ENCODE measurements at regions of chr5 and their contacts with region 1.

Region 1: DNA sequence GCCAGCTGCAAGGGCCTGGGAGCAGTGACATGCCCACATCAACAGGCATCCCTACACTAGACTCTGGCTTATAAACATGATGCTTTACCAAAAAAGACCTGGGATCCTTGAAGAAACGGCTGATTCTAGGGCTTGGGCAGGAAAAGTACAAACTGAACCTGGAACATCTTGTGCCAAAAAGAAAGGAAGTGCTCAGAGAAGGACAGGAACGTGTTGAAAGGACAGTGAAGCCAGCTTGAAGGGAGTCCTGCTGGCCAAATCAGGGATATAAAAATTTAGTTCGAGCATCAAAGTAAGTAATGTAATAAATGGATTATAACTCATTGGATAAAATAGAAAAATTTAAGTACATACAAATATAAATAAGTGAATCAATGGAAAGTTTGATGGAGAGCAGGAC is 58.1 kb downstream of the ALDH7A1 start:
- DNase-seq: no peak
- ATAC-seq: no peak
- H3K4me3 ChIP-seq: no peak overlapping the region
- H3K27ac ChIP-seq: no peak overlapping the region
- H3K4me1 ChIP-seq: peaks cover 8% of the 10 kb centered on the region
- H3K27me3 ChIP-seq: no peaks in the 10 kb centered on the region
- CTCF ChIP-seq: no peak

Region 2: DNA sequence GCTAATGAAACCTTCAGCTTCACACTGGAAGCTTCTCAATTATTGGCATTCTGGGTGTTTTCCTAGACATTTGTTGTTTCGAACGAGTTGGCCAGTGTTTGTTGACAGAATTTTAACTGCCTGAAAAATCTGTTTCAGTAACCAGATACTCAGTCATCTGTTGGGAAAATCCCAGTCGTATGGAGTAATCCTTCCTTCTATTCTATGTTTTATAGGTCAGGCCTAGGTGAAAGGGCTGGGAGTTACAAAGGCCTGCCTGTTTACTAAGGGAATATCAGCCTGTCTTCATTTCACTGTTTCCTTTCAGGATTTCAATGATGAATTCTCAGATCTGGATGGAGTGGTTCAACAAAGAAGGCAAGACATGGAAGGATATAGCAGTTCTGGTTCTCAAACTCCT is 53.7 kb before region 1 on chr5:
- CTCF ChIA-PET with region 1: no interaction called
- POLR2A ChIA-PET with region 1: no interaction called
- intact Hi-C with region 1: loop called (anchors 5 kb)
- DNase-seq: peak; percentile 22
- ATAC-seq: peak; percentile 50
- H3K4me3 ChIP-seq: no peak overlapping the region
- H3K27ac ChIP-seq: no peak overlapping the region
- H3K4me1 ChIP-seq: peaks cover 13% of the 10 kb centered on the region; the same call in 1 of the 2 replicates
- H3K27me3 ChIP-seq: no peaks in the 10 kb centered on the region
- CTCF ChIP-seq: no peak

Region 3: DNA sequence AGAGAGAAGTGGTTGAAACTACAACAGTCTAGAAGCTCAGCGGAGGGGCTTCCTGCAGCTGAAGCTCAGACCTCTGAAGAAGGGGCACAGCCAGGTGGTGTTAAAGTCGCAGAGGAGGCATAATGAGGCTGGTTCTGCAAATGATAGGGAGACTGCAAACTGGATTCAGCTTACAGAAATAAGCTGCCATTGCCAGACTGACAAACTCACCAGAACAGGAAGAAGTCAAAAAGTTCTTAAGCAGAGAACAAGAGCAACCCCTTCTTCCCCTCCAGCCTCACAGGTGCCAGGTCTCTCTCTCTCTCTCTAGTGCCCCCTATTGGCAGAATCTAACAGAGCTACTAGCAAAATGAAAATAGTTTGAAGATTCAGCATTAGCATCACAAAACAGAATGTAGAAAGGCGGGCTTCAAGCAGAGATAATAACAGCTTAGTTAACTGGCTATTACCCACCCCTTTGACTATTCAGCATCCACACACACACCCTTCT is 37.0 kb before region 1 on chr5:
- CTCF ChIA-PET with region 1: interaction called, 3 read pairs
- POLR2A ChIA-PET with region 1: no interaction called
- intact Hi-C with region 1: loop called (anchors 5 kb)
- DNase-seq: peak; percentile 36
- ATAC-seq: no peak
- H3K4me3 ChIP-seq: no peak overlapping the region
- H3K27ac ChIP-seq: no peak overlapping the region
- H3K4me1 ChIP-seq: peaks cover 5% of the 10 kb centered on the region; the same call in 1 of the 2 replicates
- H3K27me3 ChIP-seq: no peaks in the 10 kb centered on the region
- CTCF ChIP-seq: peak; percentile 59